ENCODE measurements at regions of chr22 and their contacts with region 1.

Region 1: DNA sequence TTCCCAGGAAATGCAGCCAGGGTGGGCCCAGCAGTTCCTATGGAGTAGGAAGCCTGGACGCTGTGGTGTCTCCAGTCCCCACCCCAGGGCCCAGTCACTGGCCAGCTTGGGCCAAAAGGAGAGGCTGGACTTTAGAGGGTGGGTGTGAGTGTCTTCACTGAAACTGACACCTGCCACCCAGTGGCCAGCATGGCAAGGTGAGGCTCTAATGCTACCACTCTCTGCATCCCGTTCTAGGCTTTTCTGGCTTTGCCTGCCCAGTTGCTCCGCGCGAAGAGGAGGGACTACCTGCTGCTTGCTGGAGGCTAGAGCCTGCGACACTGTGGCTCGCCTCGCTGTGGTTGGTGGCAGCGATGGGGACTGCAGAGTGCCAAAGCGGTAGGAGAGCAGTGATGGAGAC is 35.4 kb downstream of the C22orf42 start:
- DNase-seq: no peak
- H3K4me3 ChIP-seq: no peak overlapping the region
- H3K4me3 Mint-ChIP-seq: no peak overlapping the region
- H3K27ac ChIP-seq: no peak overlapping the region
- H3K27ac Mint-ChIP-seq: no peak overlapping the region
- H3K4me1 ChIP-seq: no peaks in the 10 kb centered on the region
- H3K4me1 Mint-ChIP-seq: peaks cover 4% of the 10 kb centered on the region
- H3K27me3 ChIP-seq: no peaks in the 10 kb centered on the region
- H3K27me3 Mint-ChIP-seq: peaks cover 0 to 7% (median 0%) of the 10 kb centered on the region in 3 donors
- CTCF ChIP-seq: no peak

Region 2: GRCh38 chr22:31861226-31861840 is 262.3 kb before region 1 on chr22:
- intact Hi-C with region 1: no loop called
- DNase-seq: no peak
- H3K4me3 ChIP-seq: no peak overlapping the region
- H3K4me3 Mint-ChIP-seq: no peak overlapping the region
- H3K27ac ChIP-seq: no peak overlapping the region
- H3K27ac Mint-ChIP-seq: peak overlapping the region in 1 of 7 donors; percentile 60
- H3K4me1 ChIP-seq: no peaks in the 10 kb centered on the region
- H3K4me1 Mint-ChIP-seq: no peaks in the 10 kb centered on the region
- H3K27me3 ChIP-seq: no peaks in the 10 kb centered on the region
- H3K27me3 Mint-ChIP-seq: peaks cover 0 to 3% (median 1%) of the 10 kb centered on the region in 3 donors
- CTCF ChIP-seq: no peak

Region 3: GRCh38 chr22:32164075-32164860 is 40.6 kb after region 1 on chr22:
- intact Hi-C with region 1: loop called in 1 of 2 experiments (anchors 5 kb)
- DNase-seq: peak; percentile 63 to 88 (median 77)
- H3K4me3 ChIP-seq: peak overlapping the region in 1 of 3 experiments; percentile 36
- H3K4me3 Mint-ChIP-seq: peak overlapping the region in 1 of 2 donors; percentile 72
- H3K27ac ChIP-seq: peak overlapping the region; percentile 89
- H3K27ac Mint-ChIP-seq: peak overlapping the region; percentile 86 to 97 (median 93)
- H3K4me1 ChIP-seq: peaks cover 27 to 28% of the 10 kb centered on the region in 2 donors
- H3K4me1 Mint-ChIP-seq: peaks cover 27% of the 10 kb centered on the region
- H3K27me3 ChIP-seq: no peaks in the 10 kb centered on the region
- H3K27me3 Mint-ChIP-seq: peaks cover 0 to 6% (median 3%) of the 10 kb centered on the region in 3 donors
- CTCF ChIP-seq: no peak

Region 4: GRCh38 chr22:32175683-32176644 is 52.3 kb after region 1 on chr22:
- intact Hi-C with region 1: loop called in 1 of 2 experiments (anchors 10 kb)
- DNase-seq: no peak
- H3K4me3 ChIP-seq: peak overlapping the region in 2 of 3 experiments; percentile 4 to 44
- H3K4me3 Mint-ChIP-seq: peak overlapping the region; percentile 31 to 83
- H3K27ac ChIP-seq: no peak overlapping the region
- H3K27ac Mint-ChIP-seq: no peak overlapping the region
- H3K4me1 ChIP-seq: peaks cover 6 to 11% of the 10 kb centered on the region in 2 donors
- H3K4me1 Mint-ChIP-seq: peaks cover 6% of the 10 kb centered on the region
- H3K27me3 ChIP-seq: peaks cover 14 to 49% of the 10 kb centered on the region in 2 donors
- H3K27me3 Mint-ChIP-seq: peaks cover 47 to 53% (median 50%) of the 10 kb centered on the region in 3 donors
- CTCF ChIP-seq: peak; percentile 24

Measured in CD14-positive monocyte (primary cell).